MCF 10A (cell line): ENCODE measurements at regions of chr1 and their contacts with region 1.

Region 1: DNA sequence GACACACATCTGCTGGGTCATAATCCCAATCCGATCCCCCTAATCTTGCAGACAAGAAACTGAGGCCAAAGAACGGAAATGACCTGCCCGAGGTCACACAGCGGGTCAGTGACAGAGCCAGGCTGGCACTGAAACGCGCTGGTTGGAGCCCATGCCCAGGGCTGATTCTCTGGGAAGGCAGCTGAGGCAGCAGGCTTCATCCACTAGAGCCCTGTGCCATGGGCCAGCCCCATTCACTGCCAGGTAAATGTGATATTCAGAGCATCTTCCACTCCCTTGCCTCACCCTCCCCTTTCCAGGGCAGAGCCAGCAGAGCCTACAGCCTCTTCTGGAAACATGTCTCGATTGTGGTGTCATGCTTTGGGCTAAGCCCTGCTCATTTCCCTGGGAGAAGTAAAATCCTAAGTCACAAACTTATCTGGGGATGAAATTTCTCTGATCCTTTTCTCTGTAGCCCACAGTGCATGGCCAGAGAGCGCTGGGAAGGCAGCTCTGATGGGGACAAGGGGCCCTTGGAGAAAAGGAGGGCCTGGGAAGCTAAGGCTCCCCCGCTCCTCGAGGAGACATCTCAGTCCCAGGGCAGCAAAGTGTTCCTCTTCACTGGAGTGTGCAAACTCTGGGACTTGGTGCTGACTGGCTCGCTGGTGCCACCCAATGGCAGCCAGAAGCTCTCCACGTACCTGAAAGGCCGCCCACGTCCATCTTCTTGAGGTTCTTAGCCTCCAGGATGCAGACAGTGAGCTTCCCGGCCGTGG is 110.4 kb downstream of the SYT2 start:
- DNase-seq: peak; percentile 89
- H3K4me3 Mint-ChIP-seq: no peak overlapping the region
- H3K27ac Mint-ChIP-seq: no peak overlapping the region
- H3K4me1 Mint-ChIP-seq: peaks cover 2% of the 10 kb centered on the region
- H3K27me3 Mint-ChIP-seq: no peaks in the 10 kb centered on the region
- CTCF ChIP-seq: peak; percentile 99

Region 2: DNA sequence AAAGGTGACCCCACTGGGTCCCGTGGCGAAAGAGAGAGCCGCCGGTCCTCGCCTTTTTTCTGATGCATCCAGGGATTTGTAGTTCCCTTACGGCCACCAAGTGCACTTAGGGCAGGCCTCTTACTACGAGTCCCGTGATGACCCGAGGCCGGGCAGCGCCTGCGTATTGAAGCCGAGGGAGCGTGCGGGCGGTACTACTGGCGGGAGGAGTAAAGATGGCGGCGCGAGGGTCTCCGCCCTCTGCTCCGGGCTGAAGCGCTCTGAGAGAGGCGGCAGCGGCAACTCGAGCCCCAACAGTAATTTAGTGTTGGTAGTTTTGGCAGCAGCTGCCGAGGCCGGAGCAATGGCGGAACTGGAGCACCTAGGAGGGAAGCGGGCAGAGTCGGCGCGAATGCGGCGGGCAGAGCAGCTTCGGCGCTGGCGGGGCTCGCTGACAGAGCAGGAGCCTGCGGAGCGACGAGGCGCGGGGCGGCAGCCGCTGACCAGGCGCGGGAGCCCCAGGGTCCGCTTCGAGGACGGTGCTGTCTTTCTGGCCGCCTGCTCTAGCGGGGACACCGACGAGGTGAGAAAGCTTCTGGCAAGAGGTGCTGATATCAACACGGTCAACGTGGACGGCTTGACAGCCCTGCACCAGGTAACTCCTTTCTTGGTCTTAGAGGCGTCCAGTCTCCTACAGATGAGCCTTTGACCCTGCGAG is 251.2 kb before region 1 on chr1 and contains the start of gene PPP1R12B:
- CTCF ChIA-PET with region 1: interaction called, 4 read pairs
- POLR2A ChIA-PET with region 1: no interaction called
- intact Hi-C with region 1: loop called (anchors 1 kb)
- DNase-seq: peak; percentile 100
- H3K4me3 Mint-ChIP-seq: peak within 1 kb of the TSS; percentile 81
- H3K27ac Mint-ChIP-seq: peak within 1 kb of the TSS; percentile 78
- H3K4me1 Mint-ChIP-seq: peaks cover 33% of the 10 kb centered on the region
- H3K27me3 Mint-ChIP-seq: no peaks in the 10 kb centered on the region
- CTCF ChIP-seq: no peak
- total RNA-seq, gene PPP1R12B: 31.1 and 33.8 TPM in 2 replicates

Region 3: DNA sequence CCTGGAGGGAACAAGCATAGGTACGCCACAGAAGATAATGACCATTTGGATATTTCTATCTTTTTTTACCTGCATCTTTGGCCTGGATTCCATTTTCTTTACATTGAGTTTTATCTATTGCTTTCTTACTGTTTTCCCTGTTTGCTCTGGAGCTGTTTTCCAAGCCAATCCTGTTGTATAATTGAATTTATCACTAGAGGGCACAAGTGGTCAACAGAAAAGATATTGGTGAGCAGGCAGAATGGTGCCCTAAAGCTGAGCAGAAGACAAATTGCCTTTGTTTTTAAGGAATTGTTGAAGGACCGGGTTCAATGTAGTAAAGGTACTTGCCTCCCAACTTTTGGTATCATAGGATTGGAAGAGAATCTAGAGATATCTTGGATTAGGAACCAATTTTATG is 98.6 kb before region 1 on chr1:
- CTCF ChIA-PET with region 1: interaction called, 116 read pairs
- POLR2A ChIA-PET with region 1: interaction called, 7 read pairs
- intact Hi-C with region 1: loop called (anchors 1 kb)
- DNase-seq: peak; percentile 64
- H3K4me3 Mint-ChIP-seq: no peak overlapping the region
- H3K27ac Mint-ChIP-seq: no peak overlapping the region
- H3K4me1 Mint-ChIP-seq: peaks cover 10% of the 10 kb centered on the region
- H3K27me3 Mint-ChIP-seq: no peaks in the 10 kb centered on the region
- CTCF ChIP-seq: peak; percentile 89

Region 4: DNA sequence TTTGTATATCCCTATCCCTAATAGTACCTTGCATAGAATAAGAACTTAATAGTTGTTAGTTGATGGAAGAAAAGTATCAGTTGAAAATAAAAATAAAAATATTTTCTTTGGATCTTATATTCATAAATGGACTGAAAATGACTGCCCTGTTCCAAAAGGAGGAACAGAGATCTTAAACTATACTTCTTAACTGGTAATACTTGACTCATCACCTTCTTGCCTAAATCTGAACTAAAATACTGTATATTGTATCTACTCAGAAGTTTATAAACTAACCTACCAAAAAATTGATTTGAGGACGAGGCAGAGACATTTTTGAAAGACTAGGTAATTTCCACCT is 68.4 kb before region 1 on chr1:
- CTCF ChIA-PET with region 1: interaction called, 11 read pairs
- POLR2A ChIA-PET with region 1: no interaction called
- intact Hi-C with region 1: no loop called
- DNase-seq: no peak
- H3K4me3 Mint-ChIP-seq: no peak overlapping the region
- H3K27ac Mint-ChIP-seq: no peak overlapping the region
- H3K4me1 Mint-ChIP-seq: no peaks in the 10 kb centered on the region
- H3K27me3 Mint-ChIP-seq: no peaks in the 10 kb centered on the region
- CTCF ChIP-seq: no peak

Region 5: DNA sequence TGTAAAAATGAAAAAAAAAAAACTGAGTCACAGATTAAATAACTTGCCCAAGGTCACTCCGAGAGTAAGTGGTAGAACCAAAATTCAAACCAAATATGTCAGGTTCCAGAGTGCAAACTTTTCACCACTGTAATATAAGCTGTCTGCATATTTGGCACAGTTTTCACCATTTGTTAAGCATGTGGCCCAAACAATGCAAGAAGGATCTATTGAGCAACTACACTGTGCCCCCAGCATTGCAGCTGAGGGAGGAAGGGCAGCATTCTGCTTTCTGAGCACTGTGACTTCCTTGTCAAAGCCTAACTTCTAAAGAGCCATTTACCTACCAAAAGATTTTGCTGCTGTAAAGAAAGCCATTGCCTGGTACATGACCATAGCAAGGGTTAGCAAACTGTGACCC is 23.0 kb before region 1 on chr1:
- CTCF ChIA-PET with region 1: interaction called, 34 read pairs
- POLR2A ChIA-PET with region 1: interaction called, 8 read pairs
- intact Hi-C with region 1: no loop called
- DNase-seq: peak; percentile 94
- H3K4me3 Mint-ChIP-seq: no peak overlapping the region
- H3K27ac Mint-ChIP-seq: peak overlapping the region; percentile 68
- H3K4me1 Mint-ChIP-seq: peaks cover 41% of the 10 kb centered on the region
- H3K27me3 Mint-ChIP-seq: no peaks in the 10 kb centered on the region
- CTCF ChIP-seq: no peak

Region 6: GRCh38 chr1:202615501-202616354 is 15.9 kb after region 1 on chr1:
- CTCF ChIA-PET with region 1: interaction called, 15 read pairs
- POLR2A ChIA-PET with region 1: interaction called, 3 read pairs
- intact Hi-C with region 1: no loop called
- DNase-seq: peak; percentile 31
- H3K4me3 Mint-ChIP-seq: no peak overlapping the region
- H3K27ac Mint-ChIP-seq: peak overlapping the region; percentile 28
- H3K4me1 Mint-ChIP-seq: peaks cover 28% of the 10 kb centered on the region
- H3K27me3 Mint-ChIP-seq: no peaks in the 10 kb centered on the region
- CTCF ChIP-seq: no peak